CD4-positive, alpha-beta T cell (primary cell): ENCODE measurements at regions of chr2 and their contacts with region 1.

Region 1: GRCh38 chr2:6826081-6826913 is 39.4 kb downstream of the CMPK2 start:
- DNase-seq: peak; percentile 8 to 78 (median 37)
- ATAC-seq: peak; percentile 73
- H3K4me3 ChIP-seq: no peak overlapping the region
- H3K4me3 Mint-ChIP-seq: no peak overlapping the region
- H3K27ac ChIP-seq: no peak overlapping the region
- H3K27ac Mint-ChIP-seq: no peak overlapping the region
- H3K4me1 ChIP-seq: no peaks in the 10 kb centered on the region
- H3K4me1 Mint-ChIP-seq: peaks cover 17% of the 10 kb centered on the region
- H3K27me3 ChIP-seq: no peaks in the 10 kb centered on the region
- H3K27me3 Mint-ChIP-seq: no peaks in the 10 kb centered on the region
- CTCF ChIP-seq: peak; percentile 86

Region 2: GRCh38 chr2:7044261-7045250 is 218.3 kb after region 1 on chr2:
- CTCF ChIA-PET with region 1: no interaction called
- POLR2A ChIA-PET with region 1: no interaction called
- intact Hi-C with region 1: loop called (anchors 1 to 2 kb)
- DNase-seq: peak; percentile 36 to 81 (median 59)
- ATAC-seq: peak; percentile 86
- H3K4me3 ChIP-seq: no peak overlapping the region
- H3K4me3 Mint-ChIP-seq: no peak overlapping the region
- H3K27ac ChIP-seq: no peak overlapping the region
- H3K27ac Mint-ChIP-seq: peak overlapping the region; percentile 38
- H3K4me1 ChIP-seq: peaks cover 11% of the 10 kb centered on the region
- H3K4me1 Mint-ChIP-seq: peaks cover 37% of the 10 kb centered on the region
- H3K27me3 ChIP-seq: no peaks in the 10 kb centered on the region
- H3K27me3 Mint-ChIP-seq: no peaks in the 10 kb centered on the region
- CTCF ChIP-seq: peak; percentile 97